OCI-LY7 (cell line): ENCODE measurements at regions of chr2 and their contacts with region 1.

Region 1: GRCh38 chr2:173354601-173355131 is at the start of gene CDCA7:
- DNase-seq: peak; percentile 86
- H3K4me3 ChIP-seq: peak within 1 kb of the TSS; percentile 100
- H3K27ac ChIP-seq: peak within 1 kb of the TSS; percentile 89
- H3K4me1 ChIP-seq: peaks cover 75% of the 10 kb centered on the region
- CTCF ChIP-seq: no peak
- total RNA-seq, gene CDCA7: 98.2 and 140 TPM in 2 replicates

Region 2: DNA sequence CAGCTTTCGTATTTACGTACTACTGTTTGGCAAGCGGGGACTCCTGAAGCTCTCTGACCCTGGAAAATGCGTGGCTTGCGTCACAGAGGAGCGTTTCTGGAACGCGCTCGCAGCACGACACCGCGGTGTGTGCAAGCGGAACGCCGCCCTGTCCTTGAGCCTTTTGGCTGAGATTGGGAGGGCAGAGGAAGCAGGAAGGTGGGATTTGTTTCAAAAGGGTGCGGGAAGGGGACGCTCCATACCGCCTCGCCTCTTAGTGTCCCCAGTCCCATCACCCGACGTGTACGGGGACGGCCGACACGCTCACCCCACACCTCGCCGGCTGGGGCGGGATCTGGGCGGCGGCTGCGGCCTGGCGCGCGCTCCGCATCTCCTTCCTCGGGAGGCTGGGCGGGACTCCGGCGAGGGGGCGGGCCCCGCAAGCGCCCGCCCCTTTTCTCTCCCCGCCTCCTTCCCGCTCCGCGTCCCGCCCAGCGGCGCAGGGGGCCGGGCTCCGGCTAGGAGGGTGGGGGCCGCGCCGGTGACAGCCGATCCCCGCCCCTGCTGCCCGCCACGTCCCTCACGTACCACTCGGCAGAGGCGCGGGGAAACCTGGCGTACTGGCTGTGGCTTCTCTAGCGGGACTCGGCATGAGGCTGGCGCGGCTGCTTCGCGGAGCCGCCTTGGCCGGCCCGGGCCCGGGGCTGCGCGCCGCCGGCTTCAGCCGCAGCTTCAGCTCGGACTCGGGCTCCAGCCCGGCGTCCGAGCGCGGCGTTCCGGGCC is 799.0 kb before region 1 on chr2 and contains the start of gene PDK1:
- CTCF ChIA-PET with region 1: no interaction called
- POLR2A ChIA-PET with region 1: no interaction called
- intact Hi-C with region 1: loop called (anchors 5 kb)
- DNase-seq: peak; percentile 89
- H3K4me3 ChIP-seq: peak within 1 kb of the TSS; percentile 90
- H3K27ac ChIP-seq: peak within 1 kb of the TSS; percentile 77
- H3K4me1 ChIP-seq: peaks cover 27% of the 10 kb centered on the region
- CTCF ChIP-seq: no peak
- total RNA-seq, gene PDK1: 26.0 and 29.3 TPM in 2 replicates

Region 3: DNA sequence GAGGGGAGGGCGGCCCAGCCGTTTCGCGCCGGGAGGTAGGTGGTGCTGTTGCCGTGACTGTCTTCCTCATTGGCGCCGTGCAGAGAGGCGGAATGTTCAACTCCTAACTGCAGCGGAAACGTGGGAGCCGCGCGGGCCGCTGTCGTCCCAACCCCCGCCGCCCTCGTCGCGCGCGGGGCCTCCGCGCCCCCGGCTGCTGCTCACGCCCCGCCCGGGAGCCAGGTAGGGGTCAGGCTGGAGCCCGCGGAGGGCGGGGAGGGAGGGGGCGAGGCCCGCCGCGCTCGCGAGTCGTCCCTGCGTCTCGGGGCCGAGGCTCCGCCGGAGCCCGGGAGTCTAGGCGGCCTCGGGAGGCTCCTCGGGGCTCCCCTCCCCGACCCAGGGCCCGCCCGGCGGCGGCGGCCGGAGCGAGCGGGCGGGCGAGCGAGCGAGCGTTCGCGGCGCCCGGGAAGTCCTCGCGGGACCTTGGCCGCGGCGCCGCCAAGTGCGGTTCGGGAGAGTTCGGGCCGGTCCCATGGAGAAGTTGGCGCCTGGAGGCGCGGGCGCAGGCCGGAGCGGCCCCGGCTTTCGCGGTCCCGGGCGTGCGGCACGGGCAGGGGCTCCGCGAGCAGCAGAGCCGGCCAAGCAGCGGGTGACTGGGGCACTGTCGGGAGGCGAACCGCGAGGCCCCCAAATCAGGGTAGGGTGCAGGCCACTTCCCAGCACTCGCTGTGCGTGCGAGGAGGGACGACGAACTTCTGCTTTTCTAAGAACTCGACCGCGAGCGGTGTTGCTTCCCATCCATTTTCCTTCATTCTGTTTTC is 278.7 kb before region 1 on chr2 and contains the start of gene MAP3K20:
- CTCF ChIA-PET with region 1: no interaction called
- POLR2A ChIA-PET with region 1: no interaction called
- intact Hi-C with region 1: loop called (anchors 5 kb)
- DNase-seq: peak; percentile 78
- H3K4me3 ChIP-seq: peak within 1 kb of the TSS; percentile 76
- H3K27ac ChIP-seq: peak within 1 kb of the TSS; percentile 39
- H3K4me1 ChIP-seq: peaks cover 14% of the 10 kb centered on the region
- CTCF ChIP-seq: peak; percentile 61
- total RNA-seq, gene MAP3K20: 8.2 and 9.1 TPM in 2 replicates

Region 4: GRCh38 chr2:173101687-173102086 is 253.0 kb before region 1 on chr2:
- CTCF ChIA-PET with region 1: no interaction called
- POLR2A ChIA-PET with region 1: no interaction called
- intact Hi-C with region 1: no loop called
- DNase-seq: no peak
- H3K4me3 ChIP-seq: no peak overlapping the region
- H3K27ac ChIP-seq: no peak overlapping the region
- H3K4me1 ChIP-seq: no peaks in the 10 kb centered on the region
- CTCF ChIP-seq: no peak

Region 5: GRCh38 chr2:173264603-173265366 is 89.9 kb before region 1 on chr2:
- CTCF ChIA-PET with region 1: no interaction called
- POLR2A ChIA-PET with region 1: interaction called, 3 read pairs
- intact Hi-C with region 1: loop called (anchors 2 kb)
- DNase-seq: peak; percentile 80
- H3K4me3 ChIP-seq: peak overlapping the region; percentile 36
- H3K27ac ChIP-seq: peak overlapping the region; percentile 54
- H3K4me1 ChIP-seq: peaks cover 15% of the 10 kb centered on the region
- CTCF ChIP-seq: no peak

Region 6: DNA sequence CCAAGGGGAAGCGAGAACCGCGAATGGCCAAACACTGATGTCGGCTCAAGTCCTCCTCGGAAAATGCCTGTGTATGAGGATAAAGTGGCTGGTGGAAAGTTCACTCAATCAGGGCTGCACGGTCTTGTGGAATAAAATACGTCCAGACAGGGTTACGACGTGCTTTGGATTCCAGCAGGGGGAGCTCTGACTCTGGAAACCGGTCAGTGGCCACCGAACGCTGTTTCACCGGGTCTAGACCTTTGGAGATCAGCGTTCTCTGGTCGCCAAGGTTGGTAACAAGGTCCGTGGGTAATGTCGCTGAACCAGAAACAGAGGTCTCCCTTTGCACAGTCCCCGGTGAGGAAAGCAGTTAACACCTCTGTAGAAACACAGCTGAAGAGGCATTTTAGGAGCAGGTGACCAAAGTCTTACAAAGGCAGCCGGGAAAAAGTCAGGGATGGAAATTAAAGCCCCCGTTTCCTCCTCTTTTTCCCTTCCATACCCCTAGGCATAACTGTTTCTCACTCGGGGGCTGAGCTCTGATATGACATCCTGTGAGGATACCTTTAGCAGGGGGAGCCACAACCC is 47.8 kb after region 1 on chr2:
- CTCF ChIA-PET with region 1: no interaction called
- POLR2A ChIA-PET with region 1: no interaction called
- intact Hi-C with region 1: no loop called
- DNase-seq: peak; percentile 78
- H3K4me3 ChIP-seq: no peak overlapping the region
- H3K27ac ChIP-seq: no peak overlapping the region
- H3K4me1 ChIP-seq: no peaks in the 10 kb centered on the region
- CTCF ChIP-seq: peak; percentile 89

Region 7: DNA sequence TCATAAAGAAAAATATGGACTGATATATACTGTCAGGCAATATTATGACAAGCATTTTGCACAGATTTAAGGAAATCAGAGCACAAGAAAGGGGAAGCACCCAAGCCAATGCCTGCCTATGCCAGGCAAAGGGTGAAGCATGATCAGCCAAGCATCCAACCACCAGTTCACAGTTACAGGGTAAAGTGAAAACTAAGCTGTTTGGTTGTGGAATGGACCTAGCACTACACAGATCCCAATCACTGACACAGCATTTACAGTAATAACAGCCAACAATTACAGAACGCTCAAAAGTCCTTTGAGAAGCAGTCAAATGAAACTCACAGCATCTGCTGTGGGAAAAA is 520.2 kb after region 1 on chr2:
- CTCF ChIA-PET with region 1: no interaction called
- POLR2A ChIA-PET with region 1: no interaction called
- intact Hi-C with region 1: loop called (anchors 10 kb)
- DNase-seq: peak; percentile 95
- H3K4me3 ChIP-seq: peak overlapping the region; percentile 58
- H3K27ac ChIP-seq: peak overlapping the region; percentile 99
- H3K4me1 ChIP-seq: peaks cover 78% of the 10 kb centered on the region
- CTCF ChIP-seq: no peak

Region 8: GRCh38 chr2:174593574-174594203 is 1239.0 kb after region 1 on chr2:
- CTCF ChIA-PET with region 1: no interaction called
- POLR2A ChIA-PET with region 1: no interaction called
- intact Hi-C with region 1: loop called (anchors 5 kb)
- DNase-seq: peak; percentile 94
- H3K4me3 ChIP-seq: peak overlapping the region; percentile 79
- H3K27ac ChIP-seq: peak overlapping the region; percentile 94
- H3K4me1 ChIP-seq: peaks cover 65% of the 10 kb centered on the region
- CTCF ChIP-seq: no peak